Right ventricle myocardium inferior (tissue), 1 donor: ENCODE measurements at regions of chr1 and their contacts with region 1.

Region 1: DNA sequence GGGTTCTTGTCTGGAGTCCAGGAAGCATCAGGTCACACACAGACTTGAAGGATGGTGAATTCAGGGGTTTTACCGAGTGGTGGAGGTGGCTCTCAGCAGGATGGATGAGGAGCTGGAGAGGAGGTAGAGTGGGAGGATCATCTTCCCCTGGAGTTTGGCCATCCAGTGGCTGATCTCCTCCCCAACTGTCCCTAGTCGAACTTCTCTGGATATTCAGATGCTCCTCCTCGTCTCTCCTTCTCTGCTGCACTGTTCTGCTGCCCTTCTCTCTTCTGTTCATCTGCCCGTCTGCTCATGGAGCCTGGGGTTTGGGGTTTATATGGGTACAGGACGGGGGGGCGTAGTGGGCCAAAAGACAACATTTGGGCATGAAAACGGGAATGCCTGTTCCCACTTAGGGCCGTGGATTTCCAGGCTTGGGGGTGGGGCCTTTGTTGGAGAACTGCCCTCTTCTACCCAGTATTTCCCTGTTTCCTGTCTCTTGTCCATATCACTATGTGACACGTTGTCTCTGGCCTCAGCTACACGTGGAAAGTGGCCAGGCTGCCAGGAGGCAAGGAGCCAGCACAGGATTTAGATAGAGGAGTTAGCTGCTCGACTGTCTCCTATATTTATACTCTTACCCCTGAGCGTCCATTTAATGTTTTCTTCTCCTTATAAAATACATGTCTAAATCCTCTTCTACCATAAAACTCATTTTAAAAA is 76.7 kb downstream of the SIPA1L2 start:
- DNase-seq: peak; percentile 83
- ATAC-seq: peak; percentile 82

Region 2: DNA sequence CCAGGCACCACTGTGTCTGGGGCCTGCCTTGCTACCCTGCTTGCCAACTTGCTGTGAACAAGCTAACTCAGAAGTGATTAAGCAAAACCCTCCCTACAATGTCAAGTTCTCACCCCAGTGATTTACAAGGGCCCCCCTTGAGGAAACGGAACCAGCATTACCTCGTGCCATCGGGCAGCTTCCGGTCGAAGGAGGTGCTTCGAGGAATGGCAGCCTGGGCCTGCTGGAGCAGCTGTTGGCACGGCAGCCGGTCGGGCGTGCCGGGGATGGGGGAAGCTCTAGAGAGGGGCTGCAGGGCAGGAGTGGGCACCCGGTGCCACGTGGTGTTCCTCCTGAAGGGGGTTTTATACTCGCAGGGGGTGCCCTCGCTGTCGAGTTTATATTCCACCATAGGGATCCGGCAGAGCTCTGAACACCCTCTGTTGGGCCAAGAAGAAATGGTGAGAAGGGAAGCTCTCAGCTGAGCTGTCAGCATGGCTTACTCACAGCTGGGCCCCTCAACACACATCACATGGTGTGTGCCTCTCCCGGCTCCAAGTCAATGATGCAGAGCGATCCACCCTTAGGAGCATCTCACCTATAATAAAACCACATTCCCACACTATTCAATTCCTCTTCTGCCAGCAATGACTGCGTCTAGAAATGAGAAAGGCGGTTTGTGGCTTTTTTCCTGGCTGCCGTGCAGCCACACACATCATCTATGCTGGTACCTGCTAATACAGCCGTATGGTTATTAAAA is 107.7 kb before region 1 on chr1:
- intact Hi-C with region 1: no loop called
- DNase-seq: no peak
- ATAC-seq: peak; percentile 30

Region 3: DNA sequence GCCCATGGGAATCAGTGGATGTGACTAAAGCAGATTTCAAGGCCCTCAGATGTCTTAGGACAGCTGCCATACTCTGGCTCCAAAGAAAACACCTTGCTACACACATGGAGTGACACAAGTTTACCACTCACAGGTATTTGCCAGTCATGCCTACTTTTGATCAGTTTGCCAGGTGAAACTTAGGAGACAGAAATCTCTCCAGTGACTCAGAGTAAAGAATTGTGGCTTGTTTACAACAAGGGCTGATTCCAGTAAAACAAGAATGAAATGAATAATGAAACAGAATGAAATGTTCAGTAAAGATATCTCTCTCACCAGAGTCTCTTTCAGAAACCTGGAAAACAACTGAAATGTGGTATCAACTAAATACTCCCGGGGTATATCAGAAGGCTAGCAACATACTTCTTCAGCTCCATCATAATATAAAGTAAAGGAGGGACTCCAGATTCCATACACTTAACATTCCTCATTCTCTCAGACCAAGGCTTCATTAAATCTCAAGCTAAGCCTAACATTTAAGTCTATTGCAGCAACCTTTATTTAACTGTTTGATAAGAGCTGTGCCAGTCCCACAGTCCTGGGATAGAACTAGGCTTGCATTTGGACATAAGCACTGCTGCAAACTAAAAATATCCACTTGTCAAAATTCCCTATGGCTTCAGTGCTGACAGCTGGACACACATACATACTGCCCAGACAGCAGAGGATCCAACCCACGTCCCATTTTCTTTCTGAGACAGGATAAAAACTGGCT is 66.6 kb before region 1 on chr1:
- intact Hi-C with region 1: loop called (anchors 5 kb)
- DNase-seq: no peak
- ATAC-seq: peak; percentile 85

Region 4: GRCh38 chr1:232574889-232575762 is 21.9 kb after region 1 on chr1:
- intact Hi-C with region 1: no loop called
- DNase-seq: no peak
- ATAC-seq: peak; percentile 19

Region 5: DNA sequence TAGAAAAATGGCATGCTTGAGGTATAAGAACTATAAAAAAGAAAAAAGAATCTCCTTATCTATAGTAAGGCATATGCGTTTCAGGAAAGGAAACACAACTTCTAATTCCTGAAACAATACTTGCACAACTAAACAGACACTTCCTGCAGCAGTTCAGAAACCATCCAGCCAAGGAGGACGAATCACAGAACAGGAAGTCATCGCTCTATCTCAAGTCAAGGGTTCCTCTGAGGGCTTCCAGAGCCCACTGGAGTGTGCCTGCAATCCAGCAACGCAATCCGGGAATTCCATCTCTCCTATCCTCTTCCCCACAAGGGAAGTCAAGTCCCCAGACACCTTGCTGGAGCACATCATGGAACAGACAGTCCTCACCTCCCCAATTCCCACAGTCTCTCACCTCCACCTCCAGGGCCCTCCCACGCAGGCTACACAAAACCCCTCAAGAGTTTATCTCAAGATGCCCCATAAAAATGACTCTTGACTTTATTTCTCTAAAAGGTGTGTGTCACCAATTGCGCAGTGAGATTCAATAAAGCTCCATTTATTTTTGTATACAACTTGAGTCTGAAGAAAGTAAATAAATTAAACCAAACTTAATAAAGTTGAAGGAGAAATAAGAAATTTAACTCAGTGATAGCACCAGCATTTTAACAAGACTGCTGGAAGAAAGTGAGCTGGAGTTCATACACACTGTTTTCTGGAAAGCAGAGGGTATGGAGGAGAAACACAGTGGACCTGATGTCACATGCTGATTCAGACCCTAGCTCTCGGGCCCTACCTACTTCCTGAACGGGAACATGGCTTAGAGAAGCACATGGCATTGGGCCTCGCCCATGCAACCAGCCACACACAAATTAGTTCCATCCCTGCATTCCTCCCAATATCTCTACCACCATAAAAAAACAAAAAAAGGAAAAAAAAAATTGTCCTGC is 36.9 kb after region 1 on chr1:
- intact Hi-C with region 1: no loop called
- DNase-seq: peak; percentile 67
- ATAC-seq: peak; percentile 56